ENCODE measurements at regions of chr3 and their contacts with region 1.

Region 1: DNA sequence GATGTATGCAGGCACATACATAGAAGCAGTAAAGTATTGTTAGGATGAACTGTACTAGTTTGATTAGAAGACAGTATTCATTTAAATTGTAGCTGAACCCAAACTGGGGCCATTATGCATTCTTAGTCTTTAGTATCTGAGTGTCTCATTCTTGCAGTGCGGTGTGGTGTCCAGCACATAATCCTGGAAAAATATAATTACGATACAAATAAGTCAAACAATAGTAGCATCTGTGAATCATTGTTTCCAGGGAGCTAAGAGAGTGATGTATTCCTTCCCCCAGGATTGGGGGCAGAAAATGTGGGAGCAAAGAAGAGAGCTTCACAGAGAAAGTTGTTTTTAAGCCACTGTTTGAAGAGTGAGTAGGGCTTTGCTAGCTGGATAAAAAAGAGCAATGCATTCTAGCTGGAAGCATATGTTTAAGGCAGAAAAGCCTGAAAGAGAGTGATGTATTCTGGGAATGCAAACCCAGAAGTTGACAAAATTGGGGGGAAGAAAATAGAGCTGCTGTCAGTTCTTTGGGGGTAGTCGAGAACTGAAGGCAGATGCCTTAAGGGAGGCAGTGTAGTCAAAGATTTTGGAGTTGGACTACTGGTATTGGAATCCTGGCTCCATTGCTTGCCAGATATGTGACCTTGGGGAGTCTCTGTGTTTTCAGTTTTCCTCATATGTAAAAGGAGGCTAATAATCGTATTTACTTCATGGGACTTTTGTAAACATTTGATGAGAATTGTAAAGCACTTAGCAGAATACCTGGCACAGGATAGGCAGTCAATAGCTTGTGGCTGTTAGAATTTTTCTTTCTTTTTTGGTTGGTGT is 14.1 kb downstream of the SLMAP start:
- DNase-seq: no peak
- ATAC-seq: no peak
- H3K4me3 ChIP-seq: no peak overlapping the region
- H3K27ac ChIP-seq: no peak overlapping the region
- H3K4me1 ChIP-seq: no peaks in the 10 kb centered on the region
- H3K27me3 ChIP-seq: no peaks in the 10 kb centered on the region
- CTCF ChIP-seq: no peak
- EP300 ChIP-seq: no peak
- POLR2A ChIP-seq: no peak
- RAD21 ChIP-seq: no peak

Region 2: GRCh38 chr3:57787867-57788623 is 17.8 kb after region 1 on chr3:
- CTCF ChIA-PET with region 1: interaction called, 5 read pairs
- POLR2A ChIA-PET with region 1: interaction called, 4 read pairs
- RAD21 ChIA-PET with region 1: interaction called, 3 read pairs
- SMC1A ChIA-PET with region 1: interaction called, 10 read pairs
- in situ Hi-C with region 1: no loop called
- intact Hi-C with region 1: no loop called
- DNase-seq: peak; percentile 57
- ATAC-seq: peak; percentile 97
- H3K4me3 ChIP-seq: peak overlapping the region; percentile 23; the same call in 1 of the 2 replicates
- H3K27ac ChIP-seq: peak overlapping the region; percentile 53
- H3K4me1 ChIP-seq: peaks cover 19% of the 10 kb centered on the region
- H3K27me3 ChIP-seq: no peaks in the 10 kb centered on the region
- CTCF ChIP-seq: no peak
- EP300 ChIP-seq: 0 out of 4 replicates have a peak, but pooled peaks have one; percentile 23 to 28
- POLR2A ChIP-seq: no peak
- RAD21 ChIP-seq: no peak

Measured in GM12878 (cell line).